Activated naive CD4-positive, alpha-beta T cell treated with anti-CD3 and anti-CD28 coated beads for 36 hours (primary cell): ENCODE measurements at regions of chr19 and their contacts with region 1.

Region 1: GRCh38 chr19:38245826-38246498 is 10.2 kb downstream of the PPP1R14A start:
- DNase-seq: no peak
- H3K4me3 Mint-ChIP-seq: no peak overlapping the region
- H3K27ac Mint-ChIP-seq: no peak overlapping the region
- H3K4me1 Mint-ChIP-seq: peaks cover 2% of the 10 kb centered on the region
- H3K27me3 Mint-ChIP-seq: no peaks in the 10 kb centered on the region

Region 2: GRCh38 chr19:38229585-38230073 is 16.3 kb before region 1 on chr19:
- CTCF ChIA-PET with region 1: interaction called, 10 read pairs
- intact Hi-C with region 1: no loop called
- DNase-seq: peak; percentile 71
- H3K4me3 Mint-ChIP-seq: no peak overlapping the region
- H3K27ac Mint-ChIP-seq: no peak overlapping the region
- H3K4me1 Mint-ChIP-seq: peaks cover 15% of the 10 kb centered on the region
- H3K27me3 Mint-ChIP-seq: peaks cover 54% of the 10 kb centered on the region

Region 3: DNA sequence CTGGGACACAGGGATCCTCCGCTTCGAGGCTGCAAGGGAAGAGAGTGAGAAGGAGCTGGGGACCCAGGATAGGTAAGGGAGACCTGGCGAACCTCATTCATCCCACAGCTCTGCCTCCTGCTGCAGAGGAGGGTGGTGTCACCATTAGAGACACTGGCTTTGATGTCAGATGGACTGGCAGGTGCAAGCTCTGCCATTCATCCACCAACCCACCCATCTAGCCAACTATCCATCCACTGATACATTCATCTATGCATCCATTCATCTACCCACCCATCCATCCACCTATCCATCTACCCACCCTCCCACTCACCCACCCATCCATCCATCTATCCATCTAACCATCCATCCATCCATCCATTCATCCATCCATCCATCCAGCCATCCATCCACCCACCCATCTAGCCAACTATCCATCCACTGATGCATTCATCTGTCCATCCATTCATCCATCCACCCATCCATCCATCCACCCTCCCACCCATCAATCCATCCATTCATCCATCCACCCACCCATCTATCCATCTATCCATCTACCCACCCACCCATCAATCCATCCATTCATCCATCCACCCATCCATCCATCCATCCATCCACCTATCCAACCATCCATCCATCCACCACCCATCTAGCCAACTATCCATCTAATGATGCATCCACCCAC is 63.8 kb after region 1 on chr19:
- CTCF ChIA-PET with region 1: interaction called, 10 read pairs
- intact Hi-C with region 1: no loop called
- DNase-seq: no peak
- H3K4me3 Mint-ChIP-seq: no peak overlapping the region
- H3K27ac Mint-ChIP-seq: no peak overlapping the region
- H3K4me1 Mint-ChIP-seq: peaks cover 12% of the 10 kb centered on the region
- H3K27me3 Mint-ChIP-seq: no peaks in the 10 kb centered on the region

Region 4: DNA sequence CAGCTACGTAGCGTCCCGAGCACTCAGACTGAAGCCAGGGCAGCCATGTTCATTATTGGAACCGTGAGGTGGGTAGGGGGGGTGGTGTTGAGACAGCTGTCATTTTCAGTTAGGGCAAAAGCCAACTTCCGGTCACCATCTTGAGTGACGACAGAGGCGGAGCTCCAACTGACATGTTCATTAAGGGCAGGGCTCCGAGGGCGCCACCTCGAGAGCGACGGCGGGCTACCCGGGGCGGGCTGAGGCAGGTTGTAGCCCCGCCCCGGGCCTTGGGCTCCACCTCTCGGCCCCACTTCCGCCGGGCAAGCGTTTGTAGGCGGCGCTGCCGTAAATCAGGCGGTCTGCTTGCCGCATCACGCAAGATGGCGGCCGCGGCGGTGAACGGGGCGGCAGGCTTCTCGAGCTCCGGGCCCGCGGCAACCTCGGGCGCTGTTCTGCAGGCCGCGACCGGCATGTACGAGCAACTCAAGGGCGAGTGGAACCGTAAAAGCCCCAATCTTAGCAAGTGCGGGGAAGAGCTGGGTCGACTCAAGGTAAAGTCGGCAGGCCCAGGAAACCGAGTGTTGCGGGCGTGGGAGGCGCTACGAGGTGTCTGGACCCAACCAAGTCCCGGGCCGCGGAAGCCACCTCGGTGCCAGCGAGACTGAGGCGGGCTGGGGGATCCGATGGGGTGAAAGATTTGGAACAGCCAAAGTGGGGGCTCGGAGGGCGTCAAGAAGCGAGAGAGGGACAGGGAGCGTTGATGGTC is 128.6 kb after region 1 on chr19 and contains the start of gene PSMD8:
- CTCF ChIA-PET with region 1: interaction called, 26 read pairs
- intact Hi-C with region 1: loop called (anchors 1 kb)
- DNase-seq: peak; percentile 100
- H3K4me3 Mint-ChIP-seq: peak within 1 kb of the TSS; percentile 98
- H3K27ac Mint-ChIP-seq: peak within 1 kb of the TSS; percentile 93
- H3K4me1 Mint-ChIP-seq: peaks cover 32% of the 10 kb centered on the region
- H3K27me3 Mint-ChIP-seq: no peaks in the 10 kb centered on the region
- total RNA-seq, gene PSMD8: 194 to 204 TPM

Region 5: GRCh38 chr19:38387550-38388348 is 141.8 kb after region 1 on chr19 and contains the start of gene GGN:
- CTCF ChIA-PET with region 1: interaction called, 3 read pairs
- intact Hi-C with region 1: loop called (anchors 1 kb)
- DNase-seq: peak; percentile 87
- H3K4me3 Mint-ChIP-seq: peak within 1 kb of the TSS; percentile 78
- H3K27ac Mint-ChIP-seq: no peak within 1 kb of the TSS
- H3K4me1 Mint-ChIP-seq: peaks cover 22% of the 10 kb centered on the region
- H3K27me3 Mint-ChIP-seq: peaks cover 18% of the 10 kb centered on the region
- total RNA-seq, gene GGN: 0.26 to 0.40 TPM